ENCODE measurements at regions of chr18 and their contacts with region 1.

Region 1: DNA sequence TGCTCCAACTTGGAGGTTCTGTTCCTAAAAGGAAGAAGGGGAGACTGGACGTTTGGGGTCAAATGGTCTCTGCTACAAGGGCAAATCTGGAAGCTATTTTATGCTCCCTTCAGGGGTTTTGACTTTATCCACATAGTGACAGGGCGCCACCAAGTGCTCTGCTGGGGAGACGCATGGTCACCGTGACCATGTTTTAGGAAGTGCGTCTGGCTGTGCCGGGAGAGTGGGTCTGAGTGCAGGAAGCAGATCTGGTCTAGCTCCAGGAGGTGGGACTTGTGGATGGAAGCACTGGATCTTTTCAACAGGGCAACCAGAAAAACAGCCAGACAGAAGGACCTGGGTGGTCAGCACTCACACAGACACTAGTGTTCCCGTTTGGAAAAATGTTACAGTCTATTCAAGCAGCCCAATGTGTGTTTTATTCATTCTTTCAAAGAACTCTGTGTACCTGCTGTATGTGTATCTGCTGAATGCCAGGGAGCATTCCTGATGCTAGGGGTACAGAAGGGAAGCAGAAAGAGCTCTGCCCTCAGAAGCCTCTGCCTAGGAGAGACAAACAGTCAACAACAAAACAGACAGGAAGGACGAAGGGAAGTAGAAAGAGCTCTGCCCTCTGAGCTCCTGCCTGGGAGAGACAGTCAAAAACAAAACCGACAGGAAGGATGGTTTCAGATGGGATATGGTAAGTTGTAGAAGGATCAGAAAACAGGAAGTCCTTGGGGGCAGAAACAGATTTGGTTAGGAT is 14.3 kb downstream of the IMPA2 start:
- DNase-seq: peak in 1 of 2 experiments; percentile 71
- H3K4me3 ChIP-seq: peak overlapping the region in 1 of 4 experiments; percentile 23; a peak in 2 of 8 replicates
- H3K27ac ChIP-seq: no peak overlapping the region
- H3K4me1 ChIP-seq: peaks cover 8 to 14% (median 8%) of the 10 kb centered on the region in 4 experiments; a peak in 6 of 7 replicates
- H3K27me3 ChIP-seq: no peaks in the 10 kb centered on the region
- CTCF ChIP-seq: peak; percentile 81 to 89 (median 89)
- EP300 ChIP-seq: no peak
- POLR2A ChIP-seq: no peak
- RAD21 ChIP-seq: peak; percentile 90 to 93

Region 2: DNA sequence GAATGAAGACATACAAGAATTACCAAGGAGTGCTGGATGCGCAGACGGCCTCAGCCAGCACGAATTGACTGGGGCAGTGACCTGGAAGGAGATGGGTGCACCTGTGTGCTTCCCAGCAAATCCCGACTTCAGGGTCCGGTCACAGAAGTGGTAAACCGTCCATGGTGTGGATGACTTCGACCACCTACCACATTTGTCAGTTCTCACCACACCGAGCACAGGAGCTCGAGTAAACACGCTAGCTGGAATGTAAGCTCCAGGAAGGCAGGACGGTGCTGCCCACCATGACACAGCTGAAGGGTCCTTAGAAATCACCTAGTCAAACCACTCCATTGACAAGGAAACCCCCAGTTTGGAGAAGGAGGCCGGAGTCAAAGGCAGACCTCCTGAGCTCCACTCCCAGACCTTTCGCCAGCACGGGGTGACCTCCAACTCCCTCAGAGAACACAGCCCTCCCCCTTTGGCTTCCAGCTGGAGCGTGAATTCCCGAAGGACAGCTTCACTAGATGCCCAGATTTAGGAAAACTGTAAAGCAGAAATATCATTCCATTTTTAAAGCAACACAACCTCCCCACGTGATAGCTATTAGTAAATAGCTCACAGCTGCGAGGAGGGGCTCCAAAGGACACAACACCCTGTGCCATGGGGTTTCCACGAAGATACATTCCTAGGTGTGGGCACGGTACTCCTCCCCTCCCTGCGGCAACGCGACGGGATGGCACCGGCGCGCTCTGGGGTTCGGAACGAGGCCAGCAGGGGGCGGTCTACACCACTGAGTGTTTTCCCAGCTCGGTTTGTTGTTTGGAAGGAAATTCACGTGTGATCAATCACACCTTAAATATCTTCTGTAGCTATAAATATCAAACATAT is 340.6 kb before region 1 on chr18:
- CTCF ChIA-PET with region 1: interaction called, 31 read pairs
- POLR2A ChIA-PET with region 1: no interaction called
- DNase-seq: peak; percentile 13 to 94
- H3K4me3 ChIP-seq: peak overlapping the region in 2 of 4 experiments; percentile 10 to 35; a peak in 3 of 8 replicates
- H3K27ac ChIP-seq: no peak overlapping the region
- H3K4me1 ChIP-seq: no peaks in the 10 kb centered on the region
- H3K27me3 ChIP-seq: peaks cover 0 to 8% (median 3%) of the 10 kb centered on the region in 4 experiments; a peak in 4 of 7 replicates
- CTCF ChIP-seq: peak; percentile 84 to 96 (median 88)
- EP300 ChIP-seq: no peak
- POLR2A ChIP-seq: no peak
- RAD21 ChIP-seq: peak; percentile 90 to 92

Region 3: GRCh38 chr18:11826836-11827235 is 168.8 kb before region 1 on chr18:
- CTCF ChIA-PET with region 1: interaction called, 11 read pairs
- POLR2A ChIA-PET with region 1: interaction called, 3 read pairs
- DNase-seq: no peak
- H3K4me3 ChIP-seq: no peak overlapping the region
- H3K27ac ChIP-seq: no peak overlapping the region
- H3K4me1 ChIP-seq: peaks cover 4 to 14% (median 8%) of the 10 kb centered on the region in 4 experiments; a peak in 6 of 7 replicates
- H3K27me3 ChIP-seq: no peaks in the 10 kb centered on the region
- CTCF ChIP-seq: peak; percentile 38 to 58 (median 39)
- EP300 ChIP-seq: no peak
- POLR2A ChIP-seq: no peak
- RAD21 ChIP-seq: peak; percentile 56 to 64

Region 4: DNA sequence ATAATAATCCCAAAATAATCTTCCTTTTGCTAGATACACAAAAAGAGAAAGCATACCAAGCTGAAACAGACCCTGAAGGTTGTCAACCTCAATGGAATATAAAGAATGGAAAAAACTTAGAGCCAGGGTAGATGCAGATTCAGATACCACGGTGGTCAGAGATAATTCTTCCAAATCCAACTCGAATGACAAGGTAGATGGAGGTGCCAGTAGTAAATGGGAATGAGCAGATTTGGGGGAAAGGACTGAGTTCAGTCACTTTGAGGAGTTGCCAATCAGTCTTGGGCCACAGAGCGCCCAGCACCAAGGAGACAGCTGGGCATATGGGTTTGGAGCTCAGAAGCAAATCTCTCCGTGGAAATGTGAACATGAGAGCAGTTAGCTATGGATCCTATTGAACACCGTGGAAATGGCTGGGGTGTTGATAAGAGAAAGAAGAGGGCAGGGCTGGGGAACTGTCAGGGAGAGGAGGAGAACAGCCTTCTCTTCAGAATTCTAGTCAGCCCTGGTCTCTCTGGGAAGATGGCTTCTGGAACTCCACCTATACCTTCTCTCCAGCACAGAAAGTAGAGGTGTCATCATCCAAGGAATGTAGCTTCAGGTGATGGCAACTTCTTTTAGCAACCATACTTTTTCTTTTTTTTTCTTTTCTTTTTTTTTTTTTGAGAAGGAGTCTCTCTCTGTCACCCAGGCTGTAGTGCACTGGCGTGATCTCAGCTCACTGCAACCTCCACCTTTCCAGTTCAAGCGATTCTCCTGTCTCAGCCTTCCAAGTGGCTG is 147.6 kb before region 1 on chr18:
- CTCF ChIA-PET with region 1: no interaction called
- POLR2A ChIA-PET with region 1: no interaction called
- DNase-seq: peak in 1 of 2 experiments; percentile 19
- H3K4me3 ChIP-seq: no peak overlapping the region
- H3K27ac ChIP-seq: no peak overlapping the region
- H3K4me1 ChIP-seq: peaks cover 3 to 5% (median 4%) of the 10 kb centered on the region in 4 experiments; a peak in 5 of 7 replicates
- H3K27me3 ChIP-seq: no peaks in the 10 kb centered on the region
- CTCF ChIP-seq: no peak
- EP300 ChIP-seq: no peak
- POLR2A ChIP-seq: no peak
- RAD21 ChIP-seq: no peak

Region 5: GRCh38 chr18:11947214-11948191 is 48.1 kb before region 1 on chr18:
- CTCF ChIA-PET with region 1: interaction called, 471 read pairs
- POLR2A ChIA-PET with region 1: interaction called, 19 read pairs
- DNase-seq: peak; percentile 73 to 83
- H3K4me3 ChIP-seq: peak overlapping the region; percentile 39 to 69 (median 52)
- H3K27ac ChIP-seq: peak overlapping the region; percentile 62; the same call in 1 of the 2 replicates
- H3K4me1 ChIP-seq: peaks cover 3 to 11% (median 7%) of the 10 kb centered on the region in 4 experiments
- H3K27me3 ChIP-seq: no peaks in the 10 kb centered on the region
- CTCF ChIP-seq: no peak
- EP300 ChIP-seq: no peak
- POLR2A ChIP-seq: peak in 1 of 2 experiments; percentile 61; a peak in 2 of 3 replicates
- RAD21 ChIP-seq: no peak; a peak in 1 of 4 replicates

Region 6: DNA sequence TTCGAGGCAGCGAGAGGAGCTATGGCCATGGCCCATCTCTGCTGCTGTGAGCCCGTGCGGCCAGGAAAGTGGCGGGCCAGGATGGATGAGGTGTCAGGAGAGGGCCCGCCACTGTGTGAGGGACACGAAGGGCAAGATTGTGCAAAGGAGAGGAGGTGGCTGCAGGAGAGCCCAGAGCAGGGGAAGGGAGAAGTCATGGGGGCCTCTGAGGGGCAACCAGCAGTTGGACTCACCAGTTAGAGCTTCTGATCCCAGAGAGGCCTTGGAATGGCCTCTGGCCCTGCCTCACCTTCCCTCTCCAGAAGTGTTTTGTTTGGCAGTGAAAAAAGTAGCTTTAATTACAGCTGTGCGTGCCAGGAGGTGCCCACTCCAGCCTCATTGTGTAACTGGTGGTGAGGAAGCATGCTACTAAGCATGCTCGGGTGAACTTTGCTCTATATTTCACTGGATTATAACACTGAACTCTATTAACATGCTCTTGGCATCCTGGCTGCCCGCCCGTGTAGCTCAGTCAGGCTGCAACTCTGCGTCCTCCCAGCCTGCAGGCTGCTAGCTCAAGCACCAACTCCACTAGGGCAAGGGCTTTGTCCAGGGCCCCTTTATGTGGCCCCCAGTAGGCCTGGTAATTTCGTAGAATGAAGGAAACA is 19.9 kb after region 1 on chr18:
- CTCF ChIA-PET with region 1: interaction called, 105 read pairs
- POLR2A ChIA-PET with region 1: interaction called, 4 read pairs
- DNase-seq: no peak
- H3K4me3 ChIP-seq: no peak overlapping the region
- H3K27ac ChIP-seq: no peak overlapping the region
- H3K4me1 ChIP-seq: no peaks in the 10 kb centered on the region
- H3K27me3 ChIP-seq: no peaks in the 10 kb centered on the region
- CTCF ChIP-seq: no peak
- EP300 ChIP-seq: no peak
- POLR2A ChIP-seq: no peak
- RAD21 ChIP-seq: no peak

Measured in H1 (cell line).